Naive thymus-derived CD4-positive, alpha-beta T cell (primary cell): ENCODE measurements at regions of chr22 and their contacts with region 1.

Region 1: GRCh38 chr22:22810018-22810427 is 77.6 kb upstream of the IGLL5 start:
- DNase-seq: peak; percentile 44 to 89 (median 67)
- ATAC-seq: peak; percentile 80
- H3K4me3 ChIP-seq: no peak overlapping the region
- H3K4me3 Mint-ChIP-seq: peak overlapping the region in 1 of 10 donors; percentile 49
- H3K27ac ChIP-seq: no peak overlapping the region
- H3K27ac Mint-ChIP-seq: peak overlapping the region in 5 of 9 donors; percentile 51 to 73 (median 69)
- H3K4me1 ChIP-seq: peaks cover 8 to 34% of the 10 kb centered on the region in 2 donors
- H3K4me1 Mint-ChIP-seq: peaks cover 15 to 55% (median 48%) of the 10 kb centered on the region in 7 donors
- H3K27me3 ChIP-seq: no peaks in the 10 kb centered on the region
- H3K27me3 Mint-ChIP-seq: peaks cover 0 to 35% (median 0%) of the 10 kb centered on the region in 5 donors

Region 2: GRCh38 chr22:22681221-22681739 is 128.7 kb before region 1 on chr22:
- CTCF ChIA-PET with region 1: no interaction called
- POLR2A ChIA-PET with region 1: no interaction called
- intact Hi-C with region 1: no loop called
- DNase-seq: no peak
- ATAC-seq: no peak
- H3K4me3 ChIP-seq: no peak overlapping the region
- H3K4me3 Mint-ChIP-seq: no peak overlapping the region
- H3K27ac ChIP-seq: no peak overlapping the region
- H3K27ac Mint-ChIP-seq: no peak overlapping the region
- H3K4me1 ChIP-seq: no peaks in the 10 kb centered on the region
- H3K4me1 Mint-ChIP-seq: peaks cover 0 to 8% (median 0%) of the 10 kb centered on the region in 7 donors
- H3K27me3 ChIP-seq: no peaks in the 10 kb centered on the region
- H3K27me3 Mint-ChIP-seq: peaks cover 0 to 10% (median 0%) of the 10 kb centered on the region in 5 donors

Region 3: DNA sequence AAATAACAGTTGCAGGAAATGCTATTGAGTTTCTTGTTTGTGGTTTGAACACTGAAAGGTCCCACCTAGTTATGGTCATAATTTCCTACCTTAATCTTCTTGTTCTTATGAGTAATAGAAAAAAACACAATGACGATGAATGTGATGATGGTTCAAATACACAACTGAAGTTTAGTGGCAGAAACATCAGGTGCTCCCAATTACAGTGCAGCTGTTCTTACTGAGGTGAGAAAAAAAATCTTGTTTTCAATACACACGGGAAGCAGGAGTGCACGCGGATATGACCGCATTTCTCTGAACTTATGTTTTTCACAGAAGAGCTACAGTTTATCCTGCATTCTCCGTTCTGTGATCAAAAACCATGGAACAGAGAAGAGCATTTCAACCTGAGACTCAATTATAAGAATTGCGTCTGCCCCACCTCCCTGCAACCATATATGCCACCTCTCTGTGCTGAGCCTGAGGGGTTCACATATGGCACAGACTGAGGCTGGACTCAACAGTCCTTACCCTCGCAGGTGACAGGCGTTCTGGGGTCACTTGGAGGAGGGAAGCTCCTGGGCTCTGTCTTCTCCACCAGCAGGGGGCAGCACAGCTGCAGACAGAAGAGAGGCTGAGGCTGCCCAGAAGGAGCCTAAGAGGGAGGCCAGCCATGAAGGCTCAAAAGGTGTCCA is 22.1 kb before region 1 on chr22:
- CTCF ChIA-PET with region 1: interaction called, 53 read pairs
- POLR2A ChIA-PET with region 1: interaction called, 6 read pairs
- intact Hi-C with region 1: loop called in 1 of 2 experiments (anchors 1 kb)
- DNase-seq: peak; percentile 33 to 72 (median 61)
- ATAC-seq: peak; percentile 82
- H3K4me3 ChIP-seq: no peak overlapping the region
- H3K4me3 Mint-ChIP-seq: peak overlapping the region in 1 of 10 donors; percentile 44
- H3K27ac ChIP-seq: no peak overlapping the region
- H3K27ac Mint-ChIP-seq: peak overlapping the region in 4 of 9 donors; percentile 8 to 48 (median 26)
- H3K4me1 ChIP-seq: peaks cover 10 to 56% of the 10 kb centered on the region in 2 donors
- H3K4me1 Mint-ChIP-seq: peaks cover 12 to 44% (median 26%) of the 10 kb centered on the region in 7 donors
- H3K27me3 ChIP-seq: no peaks in the 10 kb centered on the region
- H3K27me3 Mint-ChIP-seq: peaks cover 0 to 13% (median 0%) of the 10 kb centered on the region in 5 donors

Region 4: GRCh38 chr22:22848364-22848866 is 38.4 kb after region 1 on chr22:
- CTCF ChIA-PET with region 1: interaction called, 247 read pairs
- POLR2A ChIA-PET with region 1: interaction called, 96 read pairs
- intact Hi-C with region 1: loop called in 1 of 2 experiments (anchors 1 kb)
- DNase-seq: peak; percentile 35 to 75 (median 52)
- ATAC-seq: peak; percentile 83
- H3K4me3 ChIP-seq: no peak overlapping the region
- H3K4me3 Mint-ChIP-seq: no peak overlapping the region
- H3K27ac ChIP-seq: no peak overlapping the region
- H3K27ac Mint-ChIP-seq: peak overlapping the region in 3 of 9 donors; percentile 22 to 79 (median 52)
- H3K4me1 ChIP-seq: peaks cover 26 to 30% of the 10 kb centered on the region in 2 donors
- H3K4me1 Mint-ChIP-seq: peaks cover 8 to 57% (median 48%) of the 10 kb centered on the region in 7 donors
- H3K27me3 ChIP-seq: no peaks in the 10 kb centered on the region
- H3K27me3 Mint-ChIP-seq: peaks cover 0 to 59% (median 0%) of the 10 kb centered on the region in 5 donors

Region 5: GRCh38 chr22:22865311-22866072 is 55.5 kb after region 1 on chr22:
- CTCF ChIA-PET with region 1: interaction called, 11 read pairs
- POLR2A ChIA-PET with region 1: interaction called, 3 read pairs
- intact Hi-C with region 1: loop called in 1 of 2 experiments (anchors 5 kb)
- DNase-seq: peak in 8 of 9 donors; percentile 24 to 56 (median 40)
- ATAC-seq: peak; percentile 63
- H3K4me3 ChIP-seq: no peak overlapping the region
- H3K4me3 Mint-ChIP-seq: peak overlapping the region in 9 of 10 donors; percentile 4 to 61 (median 41)
- H3K27ac ChIP-seq: no peak overlapping the region
- H3K27ac Mint-ChIP-seq: peak overlapping the region in 8 of 9 donors; percentile 67 to 90 (median 80)
- H3K4me1 ChIP-seq: peaks cover 32% of the 10 kb centered on the region in 2 donors
- H3K4me1 Mint-ChIP-seq: peaks cover 28 to 52% (median 42%) of the 10 kb centered on the region in 7 donors
- H3K27me3 ChIP-seq: no peaks in the 10 kb centered on the region
- H3K27me3 Mint-ChIP-seq: peaks cover 0 to 57% (median 0%) of the 10 kb centered on the region in 5 donors

Region 6: GRCh38 chr22:22942511-22943329 is 132.7 kb after region 1 on chr22:
- CTCF ChIA-PET with region 1: interaction called, 6 read pairs
- POLR2A ChIA-PET with region 1: no interaction called
- intact Hi-C with region 1: loop called in 1 of 2 experiments (anchors 1 kb)
- DNase-seq: peak; percentile 31 to 66 (median 53)
- ATAC-seq: peak; percentile 89
- H3K4me3 ChIP-seq: no peak overlapping the region
- H3K4me3 Mint-ChIP-seq: peak overlapping the region in 1 of 10 donors; percentile 0
- H3K27ac ChIP-seq: no peak overlapping the region
- H3K27ac Mint-ChIP-seq: peak overlapping the region in 5 of 9 donors; percentile 0 to 44 (median 28)
- H3K4me1 ChIP-seq: no peaks in the 10 kb centered on the region
- H3K4me1 Mint-ChIP-seq: peaks cover 4 to 9% (median 5%) of the 10 kb centered on the region in 7 donors
- H3K27me3 ChIP-seq: no peaks in the 10 kb centered on the region
- H3K27me3 Mint-ChIP-seq: peaks cover 0 to 21% (median 0%) of the 10 kb centered on the region in 5 donors